Head of caudate nucleus (tissue), 42 donors: ENCODE measurements at regions of chr1 and their contacts with region 1.

Region 1: GRCh38 chr1:58652651-58653184 is 47.1 kb downstream of the MYSM1 start:
- DNase-seq: peak; percentile 8 to 90 (median 69)

Region 2: DNA sequence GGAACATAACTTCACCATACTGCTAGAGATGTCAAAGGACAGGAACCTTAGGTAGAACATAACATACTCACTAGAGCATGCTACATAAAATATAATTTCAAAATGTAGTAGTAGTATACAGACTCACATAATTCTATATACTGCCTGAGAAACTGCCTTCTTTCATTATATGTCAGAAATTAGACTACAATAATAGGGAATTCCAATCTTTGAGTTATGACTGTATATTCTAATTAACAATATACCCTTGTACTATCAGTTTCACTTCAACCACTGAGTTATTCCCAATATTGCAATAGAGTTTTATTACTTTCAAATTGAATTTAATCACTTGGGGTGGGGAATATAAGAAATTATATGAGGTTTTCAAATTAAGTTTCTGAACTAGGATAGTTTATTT is 150.2 kb before region 1 on chr1:
- intact Hi-C with region 1: no loop called
- DNase-seq: no peak

Region 3: GRCh38 chr1:58515794-58516401 is 136.8 kb before region 1 on chr1:
- intact Hi-C with region 1: loop called (anchors 2 kb)
- DNase-seq: peak in 33 of 42 donors; percentile 9 to 75 (median 36)

Region 4: GRCh38 chr1:58546520-58547308 is 106.0 kb before region 1 on chr1 and contains the start of gene OMA1:
- intact Hi-C with region 1: loop called (anchors 10 kb)
- DNase-seq: peak; percentile 86 to 98 (median 95)